ENCODE measurements at regions of chr20 and their contacts with region 1.

Region 1: GRCh38 chr20:36773597-36774390 is at the start of gene DSN1:
- DNase-seq: peak; percentile 100
- H3K4me3 ChIP-seq: peak within 1 kb of the TSS; percentile 81
- H3K4me3 Mint-ChIP-seq: peak within 1 kb of the TSS; percentile 80
- H3K27ac Mint-ChIP-seq: peak within 1 kb of the TSS; percentile 92
- H3K4me1 ChIP-seq: peaks cover 10% of the 10 kb centered on the region
- H3K4me1 Mint-ChIP-seq: peaks cover 19% of the 10 kb centered on the region
- H3K27me3 ChIP-seq: no peaks in the 10 kb centered on the region
- H3K27me3 Mint-ChIP-seq: no peaks in the 10 kb centered on the region
- CTCF ChIP-seq: no peak
- total RNA-seq, gene DSN1: 56.9 and 59.2 TPM in 2 replicates

Region 2: DNA sequence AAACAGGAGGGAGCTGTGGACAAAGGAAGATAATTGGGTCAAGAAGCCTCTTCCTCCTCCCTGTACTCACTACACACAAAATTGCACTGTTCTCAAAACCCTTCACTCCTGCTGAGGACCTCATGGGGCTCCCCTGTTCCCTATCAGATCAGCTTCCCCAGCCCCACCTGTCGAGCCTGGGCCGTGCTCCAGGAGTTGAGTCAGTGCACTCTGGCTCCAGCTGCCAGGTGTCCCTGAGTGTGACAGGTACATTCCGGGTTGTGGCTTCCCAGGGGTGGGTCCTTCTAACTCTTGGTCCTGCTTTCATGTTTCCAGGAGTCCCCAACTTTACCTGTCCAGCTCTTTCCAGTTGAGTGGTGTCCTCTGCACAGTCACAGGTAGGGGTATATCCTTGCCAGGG is 159.8 kb before region 1 on chr20:
- CTCF ChIA-PET with region 1: interaction called, 6 read pairs
- POLR2A ChIA-PET with region 1: interaction called, 4 read pairs
- intact Hi-C with region 1: loop called (anchors 1 kb)
- DNase-seq: no peak
- H3K4me3 ChIP-seq: no peak overlapping the region
- H3K4me3 Mint-ChIP-seq: no peak overlapping the region
- H3K27ac Mint-ChIP-seq: no peak overlapping the region
- H3K4me1 ChIP-seq: no peaks in the 10 kb centered on the region
- H3K4me1 Mint-ChIP-seq: no peaks in the 10 kb centered on the region
- H3K27me3 ChIP-seq: no peaks in the 10 kb centered on the region
- H3K27me3 Mint-ChIP-seq: no peaks in the 10 kb centered on the region
- CTCF ChIP-seq: no peak

Region 3: GRCh38 chr20:36745927-36746659 is 27.7 kb before region 1 on chr20 and contains the start of gene NDRG3:
- CTCF ChIA-PET with region 1: interaction called, 22 read pairs
- POLR2A ChIA-PET with region 1: interaction called, 20 read pairs
- intact Hi-C with region 1: loop called (anchors 1 kb)
- DNase-seq: peak; percentile 99
- H3K4me3 ChIP-seq: peak within 1 kb of the TSS; percentile 91
- H3K4me3 Mint-ChIP-seq: peak within 1 kb of the TSS; percentile 86
- H3K27ac Mint-ChIP-seq: peak within 1 kb of the TSS; percentile 77
- H3K4me1 ChIP-seq: peaks cover 12% of the 10 kb centered on the region
- H3K4me1 Mint-ChIP-seq: peaks cover 21% of the 10 kb centered on the region
- H3K27me3 ChIP-seq: no peaks in the 10 kb centered on the region
- H3K27me3 Mint-ChIP-seq: no peaks in the 10 kb centered on the region
- CTCF ChIP-seq: peak in 1 of 2 experiments; percentile 7
- total RNA-seq, gene NDRG3: 41.5 and 47.4 TPM in 2 replicates

Region 4: DNA sequence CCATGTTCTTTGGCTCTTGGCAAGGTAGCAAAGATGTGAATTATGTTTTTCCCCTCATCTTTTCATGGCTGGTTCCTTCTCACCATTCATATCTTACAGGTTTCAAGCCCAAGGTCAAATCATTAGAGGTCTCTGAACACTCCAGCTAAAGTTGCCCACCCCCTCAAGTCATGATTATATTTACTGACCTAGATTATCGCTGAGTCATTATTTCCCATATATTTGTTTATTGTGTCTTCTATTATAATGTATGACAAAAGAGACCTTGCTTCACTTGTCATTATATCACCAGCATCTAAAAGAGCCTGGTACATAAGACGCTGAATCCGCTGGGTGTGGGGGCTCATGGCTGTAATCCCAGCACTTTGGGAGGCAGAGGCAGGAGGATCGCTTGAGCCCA is 12.7 kb before region 1 on chr20:
- CTCF ChIA-PET with region 1: interaction called, 45 read pairs
- POLR2A ChIA-PET with region 1: interaction called, 12 read pairs
- intact Hi-C with region 1: no loop called
- DNase-seq: no peak
- H3K4me3 ChIP-seq: no peak overlapping the region
- H3K4me3 Mint-ChIP-seq: no peak overlapping the region
- H3K27ac Mint-ChIP-seq: no peak overlapping the region
- H3K4me1 ChIP-seq: no peaks in the 10 kb centered on the region
- H3K4me1 Mint-ChIP-seq: no peaks in the 10 kb centered on the region
- H3K27me3 ChIP-seq: no peaks in the 10 kb centered on the region
- H3K27me3 Mint-ChIP-seq: no peaks in the 10 kb centered on the region
- CTCF ChIP-seq: no peak

Region 5: GRCh38 chr20:36808317-36809257 is 34.8 kb after region 1 on chr20:
- CTCF ChIA-PET with region 1: interaction called, 12 read pairs
- POLR2A ChIA-PET with region 1: interaction called, 5 read pairs
- intact Hi-C with region 1: no loop called
- DNase-seq: peak; percentile 81 to 84
- H3K4me3 ChIP-seq: no peak overlapping the region
- H3K4me3 Mint-ChIP-seq: no peak overlapping the region
- H3K27ac Mint-ChIP-seq: no peak overlapping the region
- H3K4me1 ChIP-seq: peaks cover 5% of the 10 kb centered on the region; the same call in 1 of the 2 replicates
- H3K4me1 Mint-ChIP-seq: peaks cover under 1% of the 10 kb centered on the region
- H3K27me3 ChIP-seq: no peaks in the 10 kb centered on the region
- H3K27me3 Mint-ChIP-seq: no peaks in the 10 kb centered on the region
- CTCF ChIP-seq: peak; percentile 92 to 98